ENCODE measurements at regions of chr10 and their contacts with region 1.

Region 1: DNA sequence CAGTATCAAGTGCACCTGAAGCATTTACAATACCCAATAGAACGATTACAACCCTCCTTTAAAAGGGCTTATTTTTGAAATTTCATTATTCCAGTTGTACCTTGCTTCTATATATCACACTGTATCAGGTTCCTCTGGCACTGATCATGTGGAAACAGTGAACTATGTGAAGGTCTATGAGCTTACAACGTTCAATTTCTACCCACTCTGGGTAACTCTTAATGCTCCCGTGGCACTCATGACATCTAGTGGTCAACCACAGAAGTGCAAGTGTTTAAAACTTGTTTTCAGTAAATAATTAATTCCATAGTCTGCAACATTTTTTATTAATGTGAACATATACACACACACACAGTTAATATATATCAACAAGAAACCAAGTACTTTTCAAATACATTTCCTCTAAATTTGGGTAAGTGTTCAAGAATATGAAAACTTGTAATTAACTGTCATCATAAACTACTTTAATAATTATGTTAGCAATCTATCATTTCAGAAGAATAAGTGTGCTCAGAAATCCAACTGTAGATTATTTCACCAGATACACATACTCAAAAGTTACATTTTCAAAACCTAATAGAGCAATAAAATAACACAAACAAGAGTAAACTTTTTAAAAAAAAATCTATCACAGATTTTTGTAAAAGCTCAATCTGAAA is 61.0 kb downstream of the MPP7 start:
- DNase-seq: peak; percentile 37
- H3K4me3 Mint-ChIP-seq: no peak overlapping the region
- H3K27ac Mint-ChIP-seq: no peak overlapping the region
- H3K4me1 Mint-ChIP-seq: peaks cover 20% of the 10 kb centered on the region
- H3K27me3 Mint-ChIP-seq: no peaks in the 10 kb centered on the region

Region 2: GRCh38 chr10:27558612-27559020 is 683.3 kb before region 1 on chr10:
- CTCF ChIA-PET with region 1: interaction called, 11 read pairs
- POLR2A ChIA-PET with region 1: no interaction called
- intact Hi-C with region 1: no loop called
- DNase-seq: peak; percentile 42
- H3K4me3 Mint-ChIP-seq: no peak overlapping the region
- H3K27ac Mint-ChIP-seq: no peak overlapping the region
- H3K4me1 Mint-ChIP-seq: no peaks in the 10 kb centered on the region
- H3K27me3 Mint-ChIP-seq: no peaks in the 10 kb centered on the region

Region 3: GRCh38 chr10:28217848-28218247 is 24.0 kb before region 1 on chr10:
- CTCF ChIA-PET with region 1: interaction called, 16 read pairs
- POLR2A ChIA-PET with region 1: no interaction called
- intact Hi-C with region 1: no loop called
- DNase-seq: peak; percentile 27
- H3K4me3 Mint-ChIP-seq: no peak overlapping the region
- H3K27ac Mint-ChIP-seq: no peak overlapping the region
- H3K4me1 Mint-ChIP-seq: peaks cover 25% of the 10 kb centered on the region
- H3K27me3 Mint-ChIP-seq: no peaks in the 10 kb centered on the region

Region 4: GRCh38 chr10:28343987-28344897 is 102.4 kb after region 1 on chr10:
- CTCF ChIA-PET with region 1: no interaction called
- POLR2A ChIA-PET with region 1: no interaction called
- intact Hi-C with region 1: no loop called
- DNase-seq: no peak
- H3K4me3 Mint-ChIP-seq: no peak overlapping the region
- H3K27ac Mint-ChIP-seq: no peak overlapping the region
- H3K4me1 Mint-ChIP-seq: peaks cover 7% of the 10 kb centered on the region
- H3K27me3 Mint-ChIP-seq: peaks cover 2% of the 10 kb centered on the region

Region 5: GRCh38 chr10:28429573-28430216 is 187.8 kb after region 1 on chr10:
- CTCF ChIA-PET with region 1: no interaction called
- POLR2A ChIA-PET with region 1: no interaction called
- intact Hi-C with region 1: no loop called
- DNase-seq: no peak
- H3K4me3 Mint-ChIP-seq: no peak overlapping the region
- H3K27ac Mint-ChIP-seq: no peak overlapping the region
- H3K4me1 Mint-ChIP-seq: peaks cover 5% of the 10 kb centered on the region
- H3K27me3 Mint-ChIP-seq: no peaks in the 10 kb centered on the region